ENCODE measurements at regions of chr7 and their contacts with region 1.

Region 1: DNA sequence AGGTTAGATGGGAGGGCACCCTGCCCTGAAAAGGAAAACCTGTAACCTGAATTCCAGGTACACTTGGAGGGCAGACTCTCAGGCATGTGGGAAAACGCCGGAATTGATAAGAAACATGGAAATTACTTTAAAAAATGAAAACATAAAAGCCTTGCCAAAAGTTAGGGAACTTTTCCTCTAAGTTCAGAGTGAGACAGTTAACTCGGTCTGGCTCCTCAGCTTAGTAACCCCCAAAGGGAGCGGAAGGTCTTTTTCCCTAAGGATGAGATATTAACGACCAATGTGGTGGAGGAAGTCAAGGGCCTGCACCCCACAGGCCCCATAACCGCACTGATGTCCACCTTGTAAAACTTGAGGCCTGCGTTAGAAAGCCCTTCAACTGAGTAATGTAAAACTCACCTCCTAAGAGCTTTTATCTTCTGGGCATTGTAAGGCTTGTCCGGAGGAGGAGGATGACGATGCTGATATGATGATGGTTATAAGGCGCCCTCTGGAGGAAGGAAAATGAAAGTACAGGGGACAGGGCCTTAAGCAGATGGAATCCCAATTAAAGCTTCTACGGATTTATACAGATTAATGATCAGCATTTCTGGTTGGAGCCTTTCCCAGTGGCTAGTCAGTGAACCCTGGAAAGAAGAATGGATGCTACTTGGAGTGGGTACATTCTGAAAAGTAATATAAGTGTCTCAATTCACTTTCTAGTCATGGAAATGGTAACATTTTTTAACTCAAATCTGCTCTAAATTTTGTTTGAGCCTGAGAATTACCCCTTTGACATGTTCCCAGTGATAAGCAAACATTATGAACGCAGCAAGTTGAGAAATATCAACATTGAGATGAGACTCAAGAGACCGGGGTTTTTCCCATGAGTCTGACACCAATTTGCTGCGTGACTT is 694 bp downstream of the COL1A2 start:
- DNase-seq: peak; percentile 86
- H3K4me3 ChIP-seq: peak overlapping the region in 2 of 3 experiments; percentile 4 to 42
- H3K27ac ChIP-seq: no peak overlapping the region
- H3K4me1 ChIP-seq: peaks cover 10% of the 10 kb centered on the region
- H3K27me3 ChIP-seq: no peaks in the 10 kb centered on the region
- CTCF ChIP-seq: peak; percentile 61 to 70
- POLR2A ChIP-seq: no peak

Region 2: DNA sequence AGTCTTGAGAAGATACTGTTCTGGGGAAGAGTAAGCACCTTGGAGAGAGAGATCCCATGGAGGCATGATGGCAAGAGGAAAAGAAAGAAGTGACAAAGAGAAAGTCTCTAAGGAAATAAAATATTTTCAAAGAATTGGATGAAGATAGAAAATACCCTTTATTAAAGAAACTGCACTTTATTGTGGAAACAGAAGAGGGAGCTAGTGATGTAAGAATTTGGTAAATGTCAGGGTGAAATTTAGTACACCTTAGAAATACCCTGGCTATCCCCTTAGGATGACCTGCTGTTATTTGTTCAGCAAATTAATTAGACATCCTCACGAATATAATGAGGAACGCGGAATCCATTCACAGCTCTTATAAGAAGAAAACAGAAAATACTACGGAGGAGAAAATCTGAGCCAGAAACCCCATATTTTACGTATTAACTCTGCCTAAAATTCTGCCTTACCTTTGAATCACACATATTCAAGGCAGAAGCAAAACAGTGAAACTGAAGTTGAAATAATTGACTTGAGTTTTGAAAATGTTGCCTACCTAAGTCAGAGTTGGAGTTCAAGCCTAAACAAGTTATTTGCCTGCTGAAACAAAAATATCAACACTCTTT is 595.5 kb before region 1 on chr7:
- CTCF ChIA-PET with region 1: interaction called, 10 read pairs
- POLR2A ChIA-PET with region 1: no interaction called
- dilution Hi-C with region 1: no loop called
- intact Hi-C with region 1: loop called (anchors 5 kb)
- DNase-seq: peak; percentile 43
- H3K4me3 ChIP-seq: no peak overlapping the region
- H3K27ac ChIP-seq: no peak overlapping the region
- H3K4me1 ChIP-seq: no peaks in the 10 kb centered on the region
- H3K27me3 ChIP-seq: no peaks in the 10 kb centered on the region
- CTCF ChIP-seq: peak; percentile 32 to 45
- POLR2A ChIP-seq: no peak

Region 3: GRCh38 chr7:94087664-94088352 is 307.6 kb before region 1 on chr7:
- CTCF ChIA-PET with region 1: no interaction called
- POLR2A ChIA-PET with region 1: no interaction called
- dilution Hi-C with region 1: no loop called
- intact Hi-C with region 1: loop called (anchors 10 kb)
- DNase-seq: peak; percentile 83
- H3K4me3 ChIP-seq: no peak overlapping the region
- H3K27ac ChIP-seq: no peak overlapping the region
- H3K4me1 ChIP-seq: peaks cover 6% of the 10 kb centered on the region
- H3K27me3 ChIP-seq: peaks cover 5 to 8% of the 10 kb centered on the region in 2 experiments
- CTCF ChIP-seq: peak; percentile 66 to 85
- POLR2A ChIP-seq: no peak

Region 4: GRCh38 chr7:94295850-94296249 is 99.5 kb before region 1 on chr7:
- CTCF ChIA-PET with region 1: interaction called, 868 read pairs
- POLR2A ChIA-PET with region 1: interaction called, 5 read pairs
- dilution Hi-C with region 1: no loop called
- intact Hi-C with region 1: loop called (anchors 1 kb)
- DNase-seq: peak; percentile 75
- H3K4me3 ChIP-seq: no peak overlapping the region
- H3K27ac ChIP-seq: no peak overlapping the region
- H3K4me1 ChIP-seq: peaks cover 2% of the 10 kb centered on the region
- H3K27me3 ChIP-seq: no peaks in the 10 kb centered on the region
- CTCF ChIP-seq: peak; percentile 35 to 50
- POLR2A ChIP-seq: no peak

Region 5: GRCh38 chr7:94348142-94348541 is 47.2 kb before region 1 on chr7:
- CTCF ChIA-PET with region 1: interaction called, 12 read pairs
- POLR2A ChIA-PET with region 1: no interaction called
- dilution Hi-C with region 1: no loop called
- intact Hi-C with region 1: no loop called
- DNase-seq: peak; percentile 26
- H3K4me3 ChIP-seq: no peak overlapping the region
- H3K27ac ChIP-seq: no peak overlapping the region
- H3K4me1 ChIP-seq: no peaks in the 10 kb centered on the region
- H3K27me3 ChIP-seq: peaks cover 2% of the 10 kb centered on the region in 2 experiments
- CTCF ChIP-seq: no peak
- POLR2A ChIP-seq: no peak

Region 6: GRCh38 chr7:94410413-94411187 is 15.2 kb after region 1 on chr7:
- CTCF ChIA-PET with region 1: interaction called, 10 read pairs
- POLR2A ChIA-PET with region 1: no interaction called
- dilution Hi-C with region 1: no loop called
- intact Hi-C with region 1: no loop called
- DNase-seq: no peak
- H3K4me3 ChIP-seq: no peak overlapping the region
- H3K27ac ChIP-seq: no peak overlapping the region
- H3K4me1 ChIP-seq: peaks cover 6% of the 10 kb centered on the region
- H3K27me3 ChIP-seq: no peaks in the 10 kb centered on the region
- CTCF ChIP-seq: no peak
- POLR2A ChIP-seq: no peak

Region 7: DNA sequence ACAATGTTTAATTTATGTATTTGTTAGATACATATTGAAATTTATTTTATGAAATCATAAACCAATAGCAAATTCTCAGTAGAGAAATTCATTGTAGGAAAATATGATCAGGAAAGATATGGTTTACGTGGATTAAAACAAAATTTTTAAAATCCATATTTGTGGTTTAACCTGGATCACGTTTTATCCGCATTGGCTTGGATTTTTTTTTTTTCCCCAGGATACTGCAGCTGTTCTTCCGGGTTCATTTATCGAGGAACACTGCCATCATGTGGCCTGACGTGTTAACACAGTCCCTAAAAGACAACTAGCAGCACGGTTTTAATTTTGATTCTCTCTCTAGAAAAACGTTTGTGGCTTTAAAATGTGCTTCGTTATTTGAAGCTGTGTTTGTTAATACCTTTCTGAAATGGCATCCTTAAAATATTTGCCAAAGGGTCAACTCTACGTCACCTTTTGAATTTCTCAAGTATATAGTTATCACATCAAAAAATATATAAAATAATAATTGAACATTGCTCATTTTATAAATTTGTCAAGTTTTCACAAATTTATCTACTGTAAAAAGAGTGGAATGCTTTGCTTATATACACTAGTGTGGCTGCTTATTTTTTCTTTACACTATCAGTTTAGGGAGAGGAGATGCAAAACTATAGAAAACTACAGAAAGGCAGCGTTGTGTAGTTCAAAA is 1081.7 kb after region 1 on chr7:
- CTCF ChIA-PET with region 1: interaction called, 13 read pairs
- POLR2A ChIA-PET with region 1: no interaction called
- dilution Hi-C with region 1: no loop called
- intact Hi-C with region 1: no loop called
- DNase-seq: peak; percentile 68
- H3K4me3 ChIP-seq: no peak overlapping the region
- H3K27ac ChIP-seq: no peak overlapping the region
- H3K4me1 ChIP-seq: no peaks in the 10 kb centered on the region
- H3K27me3 ChIP-seq: peaks cover 2 to 6% of the 10 kb centered on the region in 2 experiments
- CTCF ChIP-seq: peak; percentile 59 to 67
- POLR2A ChIP-seq: no peak

Measured in endothelial cell of umbilical vein (primary cell).